Ascending aorta (tissue), 2 donors: ENCODE measurements at regions of chr16 and their contacts with region 1.

Region 1: GRCh38 chr16:87487361-87488001 is 5.3 kb downstream of the ZCCHC14 start:
- DNase-seq: no peak
- H3K4me3 ChIP-seq: peak overlapping the region in 1 of 2 donors; percentile 15
- H3K27ac ChIP-seq: peak overlapping the region in 1 of 2 donors; percentile 32
- H3K4me1 ChIP-seq: peaks cover 9 to 40% of the 10 kb centered on the region in 2 donors
- H3K27me3 ChIP-seq: no peaks in the 10 kb centered on the region
- CTCF ChIP-seq: no peak

Region 2: GRCh38 chr16:87416826-87417527 is 70.5 kb before region 1 on chr16:
- intact Hi-C with region 1: loop called (anchors 5 kb)
- DNase-seq: no peak
- H3K4me3 ChIP-seq: no peak overlapping the region
- H3K27ac ChIP-seq: no peak overlapping the region
- H3K4me1 ChIP-seq: no peaks in the 10 kb centered on the region
- H3K27me3 ChIP-seq: no peaks in the 10 kb centered on the region
- CTCF ChIP-seq: peak; percentile 32 to 70 (median 57)

Region 3: GRCh38 chr16:87471278-87472141 is 16.0 kb before region 1 on chr16:
- intact Hi-C with region 1: loop called (anchors 1 kb)
- DNase-seq: no peak
- H3K4me3 ChIP-seq: no peak overlapping the region
- H3K27ac ChIP-seq: peak overlapping the region in 1 of 2 donors; percentile 65
- H3K4me1 ChIP-seq: peaks cover 12 to 18% of the 10 kb centered on the region in 2 donors
- H3K27me3 ChIP-seq: no peaks in the 10 kb centered on the region
- CTCF ChIP-seq: no peak

Region 4: DNA sequence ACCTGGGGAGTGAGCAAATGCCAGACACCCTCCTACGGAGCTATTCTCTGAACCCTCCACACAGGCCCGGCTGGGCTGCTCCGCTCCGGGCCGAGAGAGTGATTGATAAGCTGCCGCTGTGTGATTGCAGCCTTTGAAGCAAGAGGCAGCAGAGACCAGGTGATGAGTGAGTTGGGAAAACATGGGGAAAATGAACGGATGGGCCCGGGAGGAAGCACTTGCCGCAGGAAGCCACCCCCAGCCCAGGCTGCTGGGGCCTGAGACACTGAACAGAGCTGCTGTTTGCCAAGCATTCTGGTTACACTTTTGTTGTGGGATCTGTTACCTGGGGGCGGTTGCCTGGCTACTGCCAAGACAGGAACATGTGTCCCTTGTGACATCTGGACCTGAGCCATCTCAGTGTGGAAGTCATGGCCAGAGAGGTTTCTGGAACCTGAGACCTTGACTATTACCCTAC is 324.7 kb after region 1 on chr16:
- intact Hi-C with region 1: no loop called
- DNase-seq: no peak
- H3K4me3 ChIP-seq: no peak overlapping the region
- H3K27ac ChIP-seq: no peak overlapping the region
- H3K4me1 ChIP-seq: no peaks in the 10 kb centered on the region
- H3K27me3 ChIP-seq: no peaks in the 10 kb centered on the region
- CTCF ChIP-seq: no peak